A549 (cell line): ENCODE measurements at regions of chr6 and their contacts with region 1.

Region 1: GRCh38 chr6:41735427-41736356 is at the start of gene TFEB:
- DNase-seq: peak; percentile 77 to 86
- ATAC-seq: peak; percentile 63 to 72
- H3K4me3 ChIP-seq: peak within 1 kb of the TSS; percentile 90
- H3K27ac ChIP-seq: peak within 1 kb of the TSS; percentile 95 to 99
- H3K4me1 ChIP-seq: peaks cover 32% of the 10 kb centered on the region
- CTCF ChIP-seq: peak; percentile 81
- EP300 ChIP-seq: no peak
- POLR2A ChIP-seq: no peak
- RAD21 ChIP-seq: peak; percentile 37 to 59
- polyA plus RNA-seq, gene TFEB: 2.9 and 3.1 TPM in 2 replicates

Region 2: GRCh38 chr6:41655711-41656691 is 79.7 kb before region 1 on chr6:
- CTCF ChIA-PET with region 1: no interaction called
- POLR2A ChIA-PET with region 1: no interaction called
- DNase-seq: no peak
- ATAC-seq: peak in 1 of 2 experiments; percentile 15; a peak in 2 of 6 replicates
- H3K4me3 ChIP-seq: no peak overlapping the region
- H3K27ac ChIP-seq: no peak overlapping the region
- H3K4me1 ChIP-seq: no peaks in the 10 kb centered on the region
- CTCF ChIP-seq: no peak
- EP300 ChIP-seq: no peak
- POLR2A ChIP-seq: no peak
- RAD21 ChIP-seq: no peak

Region 3: DNA sequence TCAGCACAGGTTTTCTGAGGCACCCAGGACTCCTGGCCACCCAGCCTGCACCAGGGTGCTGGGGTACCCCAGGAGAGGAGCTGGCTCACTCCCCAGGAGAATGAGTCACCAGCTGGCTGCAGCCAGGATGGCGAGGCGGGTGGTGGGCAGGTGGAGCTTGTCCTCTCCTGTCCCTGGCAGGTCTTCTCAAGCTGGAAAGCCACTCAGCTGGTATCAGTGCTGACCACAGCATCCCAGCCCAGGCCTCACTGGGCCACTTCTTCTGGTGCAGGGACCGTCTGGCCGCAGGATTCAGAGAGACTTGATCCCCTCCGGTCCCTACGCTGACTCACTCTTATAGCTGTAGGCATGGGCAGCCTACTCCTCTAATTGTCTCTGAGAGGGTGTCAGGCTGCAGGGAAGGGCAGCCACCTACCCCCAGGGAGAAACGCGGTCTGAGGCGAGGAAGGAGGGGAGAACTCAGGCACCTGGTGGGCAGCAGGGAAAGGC is 22.5 kb before region 1 on chr6:
- CTCF ChIA-PET with region 1: interaction called, 65 read pairs
- POLR2A ChIA-PET with region 1: interaction called, 29 read pairs
- DNase-seq: peak; percentile 65 to 77
- ATAC-seq: peak; percentile 83 to 84
- H3K4me3 ChIP-seq: no peak overlapping the region; the same call in 2 of the 3 replicates
- H3K27ac ChIP-seq: peak overlapping the region; percentile 98 to 99
- H3K4me1 ChIP-seq: peaks cover 66% of the 10 kb centered on the region
- CTCF ChIP-seq: no peak
- EP300 ChIP-seq: no peak
- POLR2A ChIP-seq: peak; percentile 31
- RAD21 ChIP-seq: 0 out of 5 replicates have a peak, but pooled peaks of 1 of the 2 experiments have one; percentile 10

Region 4: DNA sequence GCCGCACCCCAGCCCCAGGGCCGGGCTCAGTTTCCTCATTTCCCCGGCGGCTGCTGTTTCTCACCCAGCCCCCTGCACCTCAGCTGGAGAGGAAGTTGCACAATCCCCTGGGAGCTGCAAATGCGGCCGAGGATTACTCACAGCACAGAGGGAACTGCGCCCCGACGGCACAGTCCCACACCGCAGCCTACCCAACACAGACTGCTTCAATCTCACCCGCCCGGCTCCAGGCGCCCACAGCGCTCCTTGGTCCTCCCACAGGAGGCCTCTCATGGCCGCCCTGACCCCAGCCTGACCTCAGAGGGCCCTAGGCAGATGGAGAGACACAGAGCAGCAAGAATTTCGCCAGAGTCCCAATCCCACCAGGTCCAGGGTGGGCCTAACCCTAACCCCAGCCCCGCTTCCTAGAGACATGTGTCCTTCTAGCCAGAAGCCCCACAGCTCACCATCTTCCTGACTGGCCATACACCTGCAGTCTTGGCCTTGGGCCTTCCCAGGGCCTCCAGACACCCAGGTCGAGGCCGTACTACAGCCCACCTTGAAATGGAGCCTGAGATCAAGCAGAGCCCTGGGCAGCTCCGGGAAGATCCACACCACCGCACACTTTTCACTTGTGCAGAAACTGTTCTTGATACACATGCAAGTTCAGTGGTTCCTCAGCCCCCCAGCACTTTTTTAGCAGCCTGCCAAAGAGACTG is 12.0 kb before region 1 on chr6:
- CTCF ChIA-PET with region 1: interaction called, 11 read pairs
- POLR2A ChIA-PET with region 1: interaction called, 10 read pairs
- DNase-seq: peak; percentile 63 to 83
- ATAC-seq: peak; percentile 97
- H3K4me3 ChIP-seq: peak overlapping the region; percentile 20; the same call in 1 of the 3 replicates
- H3K27ac ChIP-seq: peak overlapping the region; percentile 76 to 89
- H3K4me1 ChIP-seq: peaks cover 29% of the 10 kb centered on the region
- CTCF ChIP-seq: no peak
- EP300 ChIP-seq: no peak
- POLR2A ChIP-seq: peak; percentile 11; the same call in 1 of the 2 replicates
- RAD21 ChIP-seq: no peak

Region 5: DNA sequence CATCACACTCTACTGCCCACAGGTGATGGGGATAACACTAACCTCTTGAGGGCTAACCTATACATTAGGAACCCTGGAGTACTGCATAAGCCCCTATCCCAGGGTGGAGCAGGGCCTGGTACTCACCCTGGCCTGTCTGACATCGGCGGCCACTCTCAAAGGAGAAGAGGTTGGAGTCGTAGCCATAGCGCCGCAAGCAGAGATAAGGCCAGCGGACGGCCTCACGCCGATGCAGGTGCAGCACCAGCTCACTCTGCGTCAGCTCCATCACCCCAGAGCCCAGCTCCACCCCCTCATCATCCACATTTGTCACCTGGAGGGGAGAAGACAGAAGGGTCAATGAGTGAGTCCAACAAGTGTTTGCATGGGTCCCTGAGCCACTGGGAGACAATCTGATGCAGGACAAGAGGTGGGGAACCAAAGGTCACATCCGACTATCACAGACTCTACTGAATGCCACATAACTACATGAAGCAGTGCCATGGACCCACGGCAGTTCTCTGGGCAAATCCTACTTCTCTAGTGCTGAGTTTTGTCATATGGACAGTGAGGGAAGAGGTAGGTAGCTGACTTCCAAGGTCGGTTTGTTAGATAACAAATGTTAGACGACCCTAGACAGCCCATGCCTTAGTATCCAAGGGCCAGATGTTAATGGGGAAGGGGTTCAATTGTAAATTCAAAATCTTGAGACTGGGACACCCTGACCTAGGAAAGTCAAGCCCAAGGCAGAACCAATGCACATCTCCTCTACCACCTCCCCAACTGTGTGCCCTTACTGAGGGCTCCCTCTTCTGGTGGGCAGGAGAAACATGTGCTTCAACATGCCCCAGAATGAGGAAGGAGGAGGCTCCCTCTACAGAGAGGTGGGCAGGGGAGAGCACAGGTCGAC is 39.8 kb after region 1 on chr6:
- CTCF ChIA-PET with region 1: interaction called, 18 read pairs
- POLR2A ChIA-PET with region 1: interaction called, 5 read pairs
- DNase-seq: peak; percentile 74 to 82
- ATAC-seq: peak; percentile 52 to 74; a peak in 5 of 6 replicates
- H3K4me3 ChIP-seq: no peak overlapping the region
- H3K27ac ChIP-seq: no peak overlapping the region
- H3K4me1 ChIP-seq: peaks cover 7% of the 10 kb centered on the region; the same call in 2 of the 3 replicates
- CTCF ChIP-seq: peak; percentile 66
- EP300 ChIP-seq: no peak
- POLR2A ChIP-seq: no peak
- RAD21 ChIP-seq: peak; percentile 70 to 84